MCF 10A (cell line): ENCODE measurements at regions of chr1 and their contacts with region 1.

Region 1: DNA sequence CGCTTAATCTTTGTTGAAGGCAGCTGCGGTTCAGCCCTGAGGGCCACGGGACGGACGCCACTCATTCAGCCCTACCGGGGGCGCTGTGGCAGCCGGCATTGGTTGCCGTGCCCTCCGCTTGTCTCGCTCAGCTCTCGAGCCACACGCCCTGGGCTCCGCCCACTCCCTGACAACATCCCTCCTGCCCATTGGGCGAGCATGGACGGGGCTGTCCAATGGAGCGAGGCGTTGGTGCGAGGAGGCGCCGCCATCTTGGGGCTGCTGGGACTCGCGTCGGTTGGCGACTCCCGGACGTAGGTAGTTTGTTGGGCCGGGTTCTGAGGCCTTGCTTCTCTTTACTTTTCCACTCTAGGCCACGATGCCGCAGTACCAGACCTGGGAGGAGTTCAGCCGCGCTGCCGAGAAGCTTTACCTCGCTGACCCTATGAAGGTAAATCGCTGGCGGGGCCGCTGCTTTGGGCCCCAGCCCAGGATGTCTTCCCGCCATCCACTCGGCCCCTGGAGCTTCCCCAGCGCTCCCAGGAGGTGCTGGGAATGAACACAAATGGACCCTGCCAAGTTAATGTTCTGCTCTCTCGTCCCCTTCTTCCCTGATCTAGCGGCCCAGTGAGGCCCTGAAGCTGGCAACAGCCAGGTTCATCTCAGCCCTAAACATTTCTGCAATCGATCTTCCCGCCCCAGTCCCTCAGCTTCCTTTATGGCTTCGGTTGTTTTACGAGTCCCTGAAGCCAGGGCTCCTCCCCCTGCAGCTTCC is at the start of gene SRP9:
- DNase-seq: peak; percentile 100
- H3K4me3 Mint-ChIP-seq: no peak within 1 kb of the TSS
- H3K27ac Mint-ChIP-seq: no peak within 1 kb of the TSS
- H3K4me1 Mint-ChIP-seq: peaks cover 21% of the 10 kb centered on the region
- H3K27me3 Mint-ChIP-seq: no peaks in the 10 kb centered on the region
- CTCF ChIP-seq: peak; percentile 96
- total RNA-seq, gene SRP9: 417 and 511 TPM in 2 replicates

Region 2: DNA sequence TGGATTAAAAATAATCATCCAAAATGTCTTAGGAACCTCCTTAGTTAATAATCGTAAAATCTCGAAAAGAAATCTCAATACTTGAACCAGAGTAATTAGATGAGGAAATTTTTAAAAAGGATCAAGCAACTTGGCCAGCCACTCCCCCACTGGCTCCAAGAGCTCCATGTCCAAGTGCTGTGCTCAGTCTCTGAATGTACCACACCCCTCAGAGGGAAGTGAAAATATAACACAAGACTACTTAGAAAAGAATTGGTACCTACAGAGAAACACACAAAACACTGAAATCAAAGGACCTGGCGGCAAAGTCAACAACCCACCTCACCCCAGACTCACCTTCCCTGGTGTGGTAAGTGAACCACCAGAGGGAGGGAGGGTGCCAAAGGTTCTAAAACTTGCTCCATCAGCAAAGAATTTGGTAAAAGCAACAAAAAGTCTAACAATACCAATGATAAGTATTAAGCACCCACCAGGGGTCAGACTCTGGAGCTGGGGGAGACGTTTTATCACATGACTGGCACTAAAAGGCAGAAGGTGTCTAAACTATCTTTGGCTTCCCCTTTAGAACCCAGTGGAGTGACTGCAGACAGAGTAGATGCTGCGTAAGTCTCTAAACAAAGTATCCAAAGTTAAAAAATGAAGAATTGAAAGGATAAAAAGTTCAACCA is 363.9 kb before region 1 on chr1:
- CTCF ChIA-PET with region 1: no interaction called
- POLR2A ChIA-PET with region 1: no interaction called
- intact Hi-C with region 1: no loop called
- DNase-seq: no peak
- H3K4me3 Mint-ChIP-seq: no peak overlapping the region
- H3K27ac Mint-ChIP-seq: no peak overlapping the region
- H3K4me1 Mint-ChIP-seq: peaks cover 7% of the 10 kb centered on the region
- H3K27me3 Mint-ChIP-seq: no peaks in the 10 kb centered on the region
- CTCF ChIP-seq: no peak

Region 3: DNA sequence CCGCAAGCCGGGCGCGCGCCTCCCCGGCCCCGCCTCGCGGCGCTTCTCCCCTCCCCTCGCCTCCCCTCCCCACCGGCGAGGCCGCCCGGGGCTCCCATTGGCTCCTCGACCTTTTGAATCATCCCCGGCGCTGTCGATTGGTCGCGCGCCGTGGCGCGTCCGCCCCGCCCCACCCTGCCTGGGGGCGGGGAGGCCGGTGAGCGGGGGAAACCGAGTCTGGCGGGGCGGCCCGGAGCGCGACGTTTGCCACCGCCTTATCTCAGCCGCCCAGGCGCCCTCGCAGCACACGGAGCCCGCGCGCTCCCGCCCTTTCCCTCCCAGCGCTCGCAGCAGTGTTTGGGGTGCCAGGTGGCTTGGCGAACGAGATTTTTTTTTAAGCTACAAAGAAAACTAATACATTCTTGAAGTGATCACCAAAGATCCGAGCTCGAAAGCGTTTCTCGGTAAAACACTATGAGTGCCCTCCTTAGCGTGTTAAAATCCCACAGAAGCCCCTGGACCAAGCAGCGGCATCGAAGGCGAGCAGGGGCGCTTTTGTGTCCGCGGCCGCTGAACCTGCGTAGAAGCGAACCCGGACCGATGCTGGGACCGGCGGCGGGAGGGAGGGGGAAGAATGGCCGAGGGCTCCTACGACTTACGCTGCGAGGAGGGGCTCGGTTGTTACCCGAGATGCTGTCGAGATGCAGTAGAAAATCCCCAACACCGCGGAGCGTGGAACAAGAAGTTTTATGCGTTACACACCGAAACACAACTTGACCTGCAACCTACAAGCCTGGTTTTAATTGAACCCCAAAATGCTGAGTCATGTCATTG is 349.5 kb before region 1 on chr1:
- CTCF ChIA-PET with region 1: interaction called, 3 read pairs
- POLR2A ChIA-PET with region 1: interaction called, 12 read pairs
- intact Hi-C with region 1: no loop called
- DNase-seq: peak; percentile 99
- H3K4me3 Mint-ChIP-seq: peak overlapping the region; percentile 75
- H3K27ac Mint-ChIP-seq: peak overlapping the region; percentile 20
- H3K4me1 Mint-ChIP-seq: peaks cover 35% of the 10 kb centered on the region
- H3K27me3 Mint-ChIP-seq: no peaks in the 10 kb centered on the region
- CTCF ChIP-seq: no peak

Region 4: DNA sequence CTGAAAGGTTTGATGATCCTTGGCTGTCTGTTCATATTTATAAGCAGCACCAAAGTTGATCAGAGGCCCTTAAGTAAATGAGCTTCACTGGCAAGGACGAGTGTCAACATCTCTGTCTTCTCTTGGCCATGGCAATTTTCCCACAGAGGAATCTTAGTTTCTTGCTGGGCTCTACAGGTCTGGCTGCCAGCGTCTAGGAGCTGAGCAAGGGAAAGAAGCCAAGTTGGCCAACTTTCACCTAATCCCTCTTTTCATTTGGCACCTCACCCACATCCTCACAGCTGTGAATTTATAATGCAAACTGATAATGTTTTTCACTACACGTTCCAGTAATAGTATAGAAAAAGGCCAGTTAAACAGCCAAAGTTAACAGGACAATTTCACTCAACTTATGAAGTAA is 250.9 kb before region 1 on chr1:
- CTCF ChIA-PET with region 1: interaction called, 9 read pairs
- POLR2A ChIA-PET with region 1: interaction called, 11 read pairs
- intact Hi-C with region 1: no loop called
- DNase-seq: peak; percentile 56
- H3K4me3 Mint-ChIP-seq: no peak overlapping the region
- H3K27ac Mint-ChIP-seq: no peak overlapping the region
- H3K4me1 Mint-ChIP-seq: peaks cover 5% of the 10 kb centered on the region
- H3K27me3 Mint-ChIP-seq: no peaks in the 10 kb centered on the region
- CTCF ChIP-seq: no peak

Region 5: GRCh38 chr1:225700164-225700740 is 77.5 kb before region 1 on chr1:
- CTCF ChIA-PET with region 1: interaction called, 50 read pairs
- POLR2A ChIA-PET with region 1: interaction called, 28 read pairs
- intact Hi-C with region 1: loop called (anchors 5 kb)
- DNase-seq: peak; percentile 100
- H3K4me3 Mint-ChIP-seq: peak overlapping the region; percentile 68
- H3K27ac Mint-ChIP-seq: peak overlapping the region; percentile 94
- H3K4me1 Mint-ChIP-seq: peaks cover 26% of the 10 kb centered on the region
- H3K27me3 Mint-ChIP-seq: no peaks in the 10 kb centered on the region
- CTCF ChIP-seq: no peak

Region 6: GRCh38 chr1:225809842-225810578 is 32.2 kb after region 1 on chr1 and contains the start of gene EPHX1:
- CTCF ChIA-PET with region 1: interaction called, 75 read pairs
- POLR2A ChIA-PET with region 1: interaction called, 135 read pairs
- intact Hi-C with region 1: loop called (anchors 1 kb)
- DNase-seq: peak; percentile 97
- H3K4me3 Mint-ChIP-seq: peak within 1 kb of the TSS; percentile 92
- H3K27ac Mint-ChIP-seq: peak within 1 kb of the TSS; percentile 82
- H3K4me1 Mint-ChIP-seq: peaks cover 25% of the 10 kb centered on the region
- H3K27me3 Mint-ChIP-seq: no peaks in the 10 kb centered on the region
- CTCF ChIP-seq: peak; percentile 35
- total RNA-seq, gene EPHX1: 25.0 and 35.8 TPM in 2 replicates

Region 7: DNA sequence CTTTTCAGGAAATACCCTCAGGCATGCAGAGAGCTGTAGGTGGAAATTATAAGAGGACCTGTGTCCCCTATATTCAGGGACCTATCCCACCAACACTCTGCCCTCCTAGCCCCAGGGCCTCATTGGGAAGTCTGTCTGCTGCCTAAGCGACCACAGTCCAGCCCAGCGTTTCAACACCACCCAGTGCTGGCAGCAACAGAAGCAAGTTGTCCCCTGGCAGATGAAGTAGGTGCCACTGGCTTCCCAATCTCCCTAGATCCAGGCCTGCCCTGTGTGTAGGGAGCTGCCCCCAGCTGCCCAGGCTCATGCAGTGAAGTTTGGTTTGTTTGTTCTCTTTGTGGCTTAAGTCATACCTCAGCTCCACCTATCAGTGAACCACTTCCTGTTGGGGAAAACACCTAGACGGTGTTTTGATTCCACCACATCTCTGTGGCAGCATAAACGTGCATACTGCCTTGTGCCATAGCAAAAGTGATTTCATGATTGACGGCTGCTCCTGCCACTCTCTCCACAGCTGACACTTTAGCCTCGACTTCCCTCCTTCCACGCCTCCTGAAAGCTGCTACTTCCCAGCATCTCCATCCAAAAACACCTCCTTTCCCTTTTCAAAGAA is 119.3 kb after region 1 on chr1:
- CTCF ChIA-PET with region 1: interaction called, 5 read pairs
- POLR2A ChIA-PET with region 1: interaction called, 10 read pairs
- intact Hi-C with region 1: no loop called
- DNase-seq: peak; percentile 78
- H3K4me3 Mint-ChIP-seq: no peak overlapping the region
- H3K27ac Mint-ChIP-seq: peak overlapping the region; percentile 78
- H3K4me1 Mint-ChIP-seq: peaks cover 17% of the 10 kb centered on the region
- H3K27me3 Mint-ChIP-seq: no peaks in the 10 kb centered on the region
- CTCF ChIP-seq: no peak

Region 8: DNA sequence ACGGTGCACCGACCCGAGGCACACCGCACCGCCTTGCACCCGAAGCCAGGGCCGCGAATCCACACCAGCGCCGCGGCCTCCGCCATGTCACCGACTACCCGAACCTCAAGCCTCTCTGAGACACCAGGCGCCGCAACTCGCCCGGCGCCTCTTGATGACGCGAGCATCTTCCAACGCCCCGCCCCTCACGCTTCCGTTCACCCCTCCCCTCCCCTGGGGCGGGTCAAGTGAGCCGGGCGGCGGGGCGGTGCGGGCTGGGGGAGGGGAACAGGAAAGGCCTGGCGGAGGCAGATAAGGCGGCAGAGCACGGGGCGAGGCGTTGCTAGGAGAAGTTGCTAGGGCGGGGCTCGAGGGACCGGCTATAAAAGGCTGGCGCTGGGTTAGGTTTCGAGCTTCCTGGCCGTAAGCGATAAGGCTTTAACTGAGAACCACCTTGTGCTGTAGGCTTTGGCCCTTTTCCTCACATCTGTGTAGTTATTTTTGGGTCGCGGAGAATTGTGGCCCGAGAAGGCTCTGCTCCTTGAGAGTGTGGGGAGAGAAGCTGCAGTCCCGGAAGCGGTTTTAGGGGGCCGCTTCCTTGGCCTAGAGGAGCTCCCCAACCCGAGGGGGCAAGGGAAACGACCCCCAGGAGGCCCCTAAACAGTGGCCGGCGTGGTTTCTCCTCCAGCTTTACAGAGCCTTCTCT is 221.6 kb after region 1 on chr1 and contains the start of gene SDE2:
- CTCF ChIA-PET with region 1: interaction called, 6 read pairs
- POLR2A ChIA-PET with region 1: interaction called, 13 read pairs
- intact Hi-C with region 1: no loop called
- DNase-seq: peak; percentile 100
- H3K4me3 Mint-ChIP-seq: peak within 1 kb of the TSS; percentile 88
- H3K27ac Mint-ChIP-seq: peak within 1 kb of the TSS; percentile 99
- H3K4me1 Mint-ChIP-seq: peaks cover 33% of the 10 kb centered on the region
- H3K27me3 Mint-ChIP-seq: no peaks in the 10 kb centered on the region
- CTCF ChIP-seq: no peak
- total RNA-seq, gene SDE2: 59.3 and 61.8 TPM in 2 replicates

Region 9: GRCh38 chr1:226736908-226737818 is 959.4 kb after region 1 on chr1:
- CTCF ChIA-PET with region 1: no interaction called
- POLR2A ChIA-PET with region 1: no interaction called
- intact Hi-C with region 1: no loop called
- DNase-seq: no peak
- H3K4me3 Mint-ChIP-seq: peak overlapping the region; percentile 82
- H3K27ac Mint-ChIP-seq: peak overlapping the region; percentile 33
- H3K4me1 Mint-ChIP-seq: peaks cover 28% of the 10 kb centered on the region
- H3K27me3 Mint-ChIP-seq: no peaks in the 10 kb centered on the region
- CTCF ChIP-seq: no peak